Activated CD4-positive, alpha-beta T cell treated with anti-CD3 and anti-CD28 coated beads, Interleukin-2, amount 10 ng/mL, durations not matched to agents 24 days and 14 days (primary cell): ENCODE measurements at regions of chr6 and their contacts with region 1.

Region 1: DNA sequence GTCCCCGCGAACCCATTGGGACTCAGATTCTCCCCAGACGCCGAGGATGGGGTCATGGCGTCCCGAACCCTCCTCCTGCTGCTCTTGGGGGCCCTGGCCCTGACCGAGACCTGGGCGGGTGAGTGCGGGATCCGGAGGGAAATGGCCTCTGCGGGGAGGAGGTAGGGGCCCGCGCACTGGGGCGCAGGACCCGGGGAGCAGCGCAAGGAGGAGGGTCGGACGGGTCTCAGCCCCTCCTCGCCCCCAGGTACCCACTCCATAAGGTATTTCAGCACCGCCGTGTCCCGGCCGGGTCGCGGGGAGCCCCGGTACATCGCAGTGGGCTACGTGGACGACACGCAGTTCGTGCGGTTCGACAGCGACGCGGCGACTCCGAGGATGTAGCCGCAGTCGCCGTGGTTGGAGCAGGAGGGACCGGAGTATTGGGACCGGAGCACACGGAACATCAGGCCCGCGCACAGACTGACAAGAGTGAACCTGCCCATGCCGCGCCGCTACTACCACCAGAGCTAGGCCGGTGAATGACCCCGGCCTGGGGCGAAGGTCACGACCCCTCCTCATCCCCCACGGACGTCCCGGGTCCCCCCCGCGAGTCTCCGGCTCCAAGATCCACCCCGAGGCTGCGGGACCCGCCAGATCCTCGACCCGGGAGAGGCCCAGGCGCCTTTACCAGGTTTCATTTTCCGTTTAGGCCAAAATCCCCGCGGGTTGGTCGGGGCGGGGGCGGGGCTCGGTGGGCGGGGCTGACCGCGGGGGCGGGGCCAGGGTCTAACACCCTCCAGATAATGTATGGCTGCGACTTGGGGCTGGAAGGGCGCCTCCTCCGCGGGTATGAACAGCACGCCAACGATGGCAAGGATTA is 15.7 kb upstream of the HLA-A start:
- DNase-seq: peak; percentile 94
- H3K4me3 Mint-ChIP-seq: peak overlapping the region; percentile 88
- H3K27ac Mint-ChIP-seq: peak overlapping the region; percentile 94
- H3K4me1 Mint-ChIP-seq: peaks cover 28% of the 10 kb centered on the region
- H3K27me3 Mint-ChIP-seq: peaks cover 1% of the 10 kb centered on the region

Region 2: GRCh38 chr6:29847871-29848630 is 78.6 kb before region 1 on chr6:
- intact Hi-C with region 1: loop called (anchors 10 kb)
- DNase-seq: peak; percentile 95
- H3K4me3 Mint-ChIP-seq: no peak overlapping the region
- H3K27ac Mint-ChIP-seq: no peak overlapping the region
- H3K4me1 Mint-ChIP-seq: peaks cover 26% of the 10 kb centered on the region
- H3K27me3 Mint-ChIP-seq: peaks cover 55% of the 10 kb centered on the region

Region 3: DNA sequence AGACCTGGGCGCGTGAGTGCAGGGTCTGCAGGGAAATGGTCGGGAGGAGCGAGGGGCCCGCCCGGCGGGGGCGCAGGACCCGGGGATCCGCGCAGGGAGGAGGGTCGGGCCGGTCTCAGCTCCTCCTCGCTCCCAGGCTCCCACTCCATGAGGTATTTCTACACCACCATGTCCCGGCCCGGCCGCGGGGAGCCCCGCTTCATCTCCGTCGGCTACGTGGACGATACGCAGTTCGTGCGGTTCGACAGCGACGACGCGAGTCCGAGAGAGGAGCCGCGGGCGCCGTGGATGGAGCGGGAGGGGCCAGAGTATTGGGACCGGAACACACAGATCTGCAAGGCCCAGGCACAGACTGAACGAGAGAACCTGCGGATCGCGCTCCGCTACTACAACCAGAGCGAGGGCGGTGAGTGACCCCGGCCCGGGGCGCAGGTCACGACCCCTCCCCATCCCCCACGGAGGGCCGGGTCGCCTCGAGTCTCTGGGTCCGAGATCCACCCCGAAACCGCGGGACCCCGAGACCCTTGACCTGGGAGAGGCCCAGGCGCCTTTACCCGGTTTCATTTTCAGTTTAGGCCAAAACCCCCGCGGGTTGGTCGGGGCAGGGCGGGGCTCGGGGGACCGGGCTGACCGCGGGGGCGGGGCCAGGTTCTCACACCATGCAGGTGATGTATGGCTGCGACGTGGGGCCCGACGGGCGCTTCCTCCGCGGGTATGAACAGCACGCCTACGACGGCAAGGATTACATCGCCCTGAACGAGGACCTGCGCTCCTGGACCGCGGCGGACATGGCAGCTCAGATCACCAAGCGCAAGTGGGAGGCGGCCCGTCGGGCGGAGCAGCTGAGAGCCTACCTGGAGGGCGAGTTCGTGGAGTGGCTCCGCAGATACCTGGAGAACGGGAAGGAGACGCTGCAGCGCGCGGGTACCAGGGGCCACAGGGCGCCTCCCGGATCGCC is 38.5 kb before region 1 on chr6:
- intact Hi-C with region 1: loop called (anchors 2 kb)
- DNase-seq: peak; percentile 95
- H3K4me3 Mint-ChIP-seq: peak overlapping the region; percentile 92
- H3K27ac Mint-ChIP-seq: peak overlapping the region; percentile 89
- H3K4me1 Mint-ChIP-seq: peaks cover 15% of the 10 kb centered on the region
- H3K27me3 Mint-ChIP-seq: peaks cover 25% of the 10 kb centered on the region

Region 4: GRCh38 chr6:29942275-29943052 is 15.8 kb after region 1 on chr6 and contains the start of gene HLA-A:
- intact Hi-C with region 1: loop called (anchors 1 kb)
- DNase-seq: peak; percentile 97
- H3K4me3 Mint-ChIP-seq: peak within 1 kb of the TSS; percentile 95
- H3K27ac Mint-ChIP-seq: peak within 1 kb of the TSS; percentile 99
- H3K4me1 Mint-ChIP-seq: peaks cover 46% of the 10 kb centered on the region
- H3K27me3 Mint-ChIP-seq: no peaks in the 10 kb centered on the region
- total RNA-seq, gene HLA-A: 1,449 and 1,452 TPM in 2 replicates

Region 5: GRCh38 chr6:30066577-30067459 is 140.2 kb after region 1 on chr6 and contains the start of gene PPP1R11:
- intact Hi-C with region 1: loop called (anchors 5 kb)
- DNase-seq: peak; percentile 99
- H3K4me3 Mint-ChIP-seq: peak within 1 kb of the TSS; percentile 93
- H3K27ac Mint-ChIP-seq: peak within 1 kb of the TSS; percentile 99
- H3K4me1 Mint-ChIP-seq: peaks cover 45% of the 10 kb centered on the region
- H3K27me3 Mint-ChIP-seq: peaks cover 16% of the 10 kb centered on the region
- total RNA-seq, gene PPP1R11: 60.9 and 61.1 TPM in 2 replicates